ENCODE measurements at regions of chr6 and their contacts with region 1.

Region 1: DNA sequence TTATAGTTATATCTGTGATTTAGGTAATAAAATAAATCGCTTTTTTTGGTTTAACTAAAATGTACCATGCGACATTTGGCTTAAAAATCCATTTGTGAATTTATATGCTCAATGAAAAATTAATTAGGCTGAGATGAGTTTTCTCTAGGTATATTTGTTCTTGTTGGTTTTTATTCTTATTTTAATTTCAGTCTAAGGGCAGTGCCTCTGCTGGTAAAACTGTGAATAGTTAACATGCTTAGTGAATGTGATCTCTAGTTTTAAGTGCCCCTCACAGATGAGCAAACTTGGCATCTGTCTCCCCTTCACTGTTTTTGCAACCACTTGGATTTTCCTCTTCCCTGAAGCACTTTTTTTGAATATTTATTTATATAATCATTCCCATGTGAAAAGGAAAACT is 822.7 kb downstream of the GRIK2 start:
- DNase-seq: no peak
- ATAC-seq: no peak
- H3K4me3 ChIP-seq: no peak overlapping the region
- H3K27ac ChIP-seq: no peak overlapping the region
- H3K4me1 ChIP-seq: no peaks in the 10 kb centered on the region
- H3K27me3 ChIP-seq: no peaks in the 10 kb centered on the region
- CTCF ChIP-seq: peak in 2 of 3 experiments; percentile 6 to 29; a peak in 2 of 6 replicates
- POLR2A ChIP-seq: no peak
- RAD21 ChIP-seq: no peak

Region 2: DNA sequence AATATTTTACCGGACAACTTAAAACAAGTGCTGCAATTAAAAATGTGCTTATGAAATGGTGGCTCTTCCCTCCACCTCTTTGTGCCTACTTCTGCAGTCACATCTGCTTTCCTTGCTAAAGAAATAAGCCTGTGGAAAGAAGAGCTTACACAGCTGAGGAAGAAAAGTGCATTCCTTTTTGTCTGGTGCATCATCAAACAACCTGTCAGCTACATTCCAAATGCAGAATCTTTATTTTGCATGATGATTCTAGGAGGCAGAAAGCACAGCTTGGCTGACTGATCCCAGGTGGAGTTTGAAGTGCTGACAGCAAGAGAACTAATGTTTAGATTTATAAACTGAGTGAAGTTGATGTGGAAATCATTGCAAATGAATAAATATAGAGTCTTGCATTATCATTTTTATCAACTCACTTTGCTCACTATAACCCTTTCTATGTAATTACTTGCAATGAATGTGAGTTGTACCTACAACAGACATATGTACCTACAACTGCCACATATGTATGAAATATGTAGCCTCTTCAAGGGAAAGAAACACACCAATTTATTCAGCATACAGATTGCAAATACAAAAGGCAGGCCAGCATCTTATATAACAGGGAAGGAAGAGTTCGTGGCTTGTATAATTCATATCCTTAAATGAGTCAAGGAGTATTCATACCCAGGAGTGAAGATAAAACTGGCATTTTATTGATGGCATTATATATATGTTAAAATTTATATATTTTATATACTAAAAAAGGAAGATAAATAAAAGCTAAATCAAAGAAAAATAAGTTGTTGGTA is 1998.8 kb before region 1 on chr6:
- CTCF ChIA-PET with region 1: no interaction called
- POLR2A ChIA-PET with region 1: no interaction called
- RAD21 ChIA-PET with region 1: no interaction called
- intact Hi-C with region 1: no loop called
- DNase-seq: no peak
- ATAC-seq: no peak
- H3K4me3 ChIP-seq: no peak overlapping the region
- H3K27ac ChIP-seq: no peak overlapping the region
- H3K4me1 ChIP-seq: no peaks in the 10 kb centered on the region
- H3K27me3 ChIP-seq: no peaks in the 10 kb centered on the region
- CTCF ChIP-seq: no peak
- POLR2A ChIP-seq: no peak
- RAD21 ChIP-seq: no peak

Region 3: GRCh38 chr6:100446115-100447080 is 1769.8 kb before region 1 on chr6:
- CTCF ChIA-PET with region 1: no interaction called
- POLR2A ChIA-PET with region 1: no interaction called
- RAD21 ChIA-PET with region 1: no interaction called
- intact Hi-C with region 1: no loop called
- DNase-seq: no peak
- ATAC-seq: no peak
- H3K4me3 ChIP-seq: no peak overlapping the region
- H3K27ac ChIP-seq: no peak overlapping the region
- H3K4me1 ChIP-seq: no peaks in the 10 kb centered on the region
- H3K27me3 ChIP-seq: no peaks in the 10 kb centered on the region
- CTCF ChIP-seq: no peak
- POLR2A ChIP-seq: no peak
- RAD21 ChIP-seq: no peak

Region 4: GRCh38 chr6:102187186-102187585 is 29.0 kb before region 1 on chr6:
- CTCF ChIA-PET with region 1: no interaction called
- POLR2A ChIA-PET with region 1: no interaction called
- RAD21 ChIA-PET with region 1: no interaction called
- intact Hi-C with region 1: loop called (anchors 1 kb)
- DNase-seq: no peak
- ATAC-seq: no peak
- H3K4me3 ChIP-seq: no peak overlapping the region
- H3K27ac ChIP-seq: no peak overlapping the region
- H3K4me1 ChIP-seq: no peaks in the 10 kb centered on the region
- H3K27me3 ChIP-seq: no peaks in the 10 kb centered on the region
- CTCF ChIP-seq: no peak
- POLR2A ChIP-seq: no peak
- RAD21 ChIP-seq: no peak